ENCODE measurements at regions of chr13 and their contacts with region 1.

Region 1: DNA sequence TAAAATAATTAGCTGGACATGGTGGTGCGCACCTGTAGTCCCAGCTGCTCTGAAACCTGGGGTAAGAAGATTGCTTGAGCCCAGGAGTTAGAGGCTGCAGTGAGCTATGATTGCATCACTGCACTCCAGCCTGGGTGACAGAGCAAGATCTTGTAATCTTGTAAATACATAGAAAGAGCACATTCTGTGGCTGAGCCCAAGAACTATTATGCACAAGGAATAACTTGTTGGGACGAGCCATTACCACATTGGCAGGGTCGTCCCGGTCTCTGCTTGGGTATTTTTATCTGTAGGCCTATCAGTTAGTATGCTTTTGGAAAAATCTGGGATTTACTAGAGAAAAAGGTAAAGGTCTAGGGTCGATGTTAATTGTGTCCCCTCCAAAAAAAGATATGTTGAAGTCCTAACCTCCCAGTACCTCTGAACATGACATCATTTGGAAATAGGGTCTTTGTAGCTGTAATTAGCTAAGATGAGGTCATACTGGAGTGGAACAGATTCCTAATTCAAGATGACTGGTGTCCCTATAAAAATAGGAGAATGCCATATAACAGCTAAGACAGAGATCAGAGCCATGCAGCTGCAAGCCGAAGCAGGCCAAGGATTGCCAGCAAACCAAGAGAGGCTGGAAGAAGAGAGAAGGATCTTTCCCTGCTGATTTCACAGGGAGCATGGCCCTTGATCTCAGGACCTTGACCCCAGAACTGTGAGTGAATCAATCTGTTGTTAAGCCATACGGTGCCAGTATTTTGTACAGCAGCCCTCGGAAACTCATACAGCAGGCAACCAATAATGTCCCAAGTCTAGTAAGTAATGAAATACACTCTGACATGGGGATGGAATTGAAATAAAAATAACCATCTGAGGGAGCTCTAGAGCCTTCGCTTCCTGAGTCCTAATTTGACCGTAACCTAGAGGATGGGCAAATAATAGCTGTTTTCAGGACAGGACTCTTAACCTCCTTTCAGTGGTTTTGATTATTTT is 77.0 kb downstream of the TM9SF2 start:
- DNase-seq: no peak
- H3K4me3 ChIP-seq: no peak overlapping the region
- H3K4me3 Mint-ChIP-seq: no peak overlapping the region
- H3K27ac ChIP-seq: no peak overlapping the region
- H3K27ac Mint-ChIP-seq: peak overlapping the region in 4 of 7 donors; percentile 4 to 65 (median 32)
- H3K4me1 ChIP-seq: no peaks in the 10 kb centered on the region
- H3K4me1 Mint-ChIP-seq: peaks cover 0 to 11% (median 5%) of the 10 kb centered on the region in 4 donors
- H3K27me3 ChIP-seq: no peaks in the 10 kb centered on the region
- H3K27me3 Mint-ChIP-seq: no peaks in the 10 kb centered on the region

Region 2: GRCh38 chr13:99589575-99589974 is 11.3 kb after region 1 on chr13:
- CTCF ChIA-PET with region 1: interaction called, 12 read pairs
- POLR2A ChIA-PET with region 1: no interaction called
- intact Hi-C with region 1: no loop called
- DNase-seq: no peak
- H3K4me3 ChIP-seq: no peak overlapping the region
- H3K4me3 Mint-ChIP-seq: no peak overlapping the region
- H3K27ac ChIP-seq: no peak overlapping the region
- H3K27ac Mint-ChIP-seq: no peak overlapping the region
- H3K4me1 ChIP-seq: no peaks in the 10 kb centered on the region
- H3K4me1 Mint-ChIP-seq: no peaks in the 10 kb centered on the region
- H3K27me3 ChIP-seq: no peaks in the 10 kb centered on the region
- H3K27me3 Mint-ChIP-seq: peaks cover 2% of the 10 kb centered on the region in 2 donors

Region 3: DNA sequence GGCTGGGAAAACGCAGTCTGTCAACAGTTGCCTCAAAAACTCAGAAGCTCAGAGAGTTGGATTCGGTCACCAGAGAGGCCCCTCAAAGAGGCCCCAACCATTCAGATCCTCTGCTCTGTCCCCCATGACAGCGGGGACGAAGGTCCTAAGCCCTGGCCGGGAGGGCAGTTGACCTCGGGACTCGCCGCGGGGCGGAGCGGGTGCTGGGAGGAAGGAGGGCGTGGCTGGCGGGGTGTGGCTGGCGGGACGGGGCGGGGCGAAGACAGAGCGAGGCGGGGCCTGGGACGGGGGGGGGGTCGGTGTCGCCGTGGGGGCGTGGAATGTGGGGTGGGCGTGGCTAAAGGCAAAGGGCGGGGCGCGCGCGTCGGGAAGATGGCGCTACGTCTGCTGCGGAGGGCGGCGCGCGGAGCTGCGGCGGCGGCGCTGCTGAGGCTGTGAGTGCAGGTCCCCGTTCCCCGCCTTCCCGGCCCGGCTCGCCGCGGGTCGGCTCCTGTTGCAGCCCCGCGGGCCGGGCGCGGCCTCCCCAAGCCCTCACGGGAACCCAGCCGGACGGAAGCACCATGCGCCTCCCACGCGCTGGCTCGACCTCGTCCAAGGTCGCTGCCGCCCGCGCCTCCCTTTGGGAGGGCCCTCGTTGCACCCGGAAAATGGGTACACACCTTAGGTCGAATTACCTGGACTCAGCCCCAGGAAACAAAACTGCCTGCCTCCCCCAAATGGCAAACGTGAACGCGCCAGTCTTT is 28.3 kb after region 1 on chr13:
- CTCF ChIA-PET with region 1: interaction called, 18 read pairs
- POLR2A ChIA-PET with region 1: interaction called, 9 read pairs
- intact Hi-C with region 1: no loop called
- DNase-seq: peak; percentile 87 to 90 (median 89)
- H3K4me3 ChIP-seq: peak within 1 kb of the TSS; percentile 53 to 78
- H3K4me3 Mint-ChIP-seq: peak within 1 kb of the TSS; percentile 88 to 97 (median 90)
- H3K27ac ChIP-seq: peak within 1 kb of the TSS; percentile 71
- H3K27ac Mint-ChIP-seq: peak within 1 kb of the TSS; percentile 91 to 96 (median 95)
- H3K4me1 ChIP-seq: peaks cover 35% of the 10 kb centered on the region
- H3K4me1 Mint-ChIP-seq: peaks cover 28 to 59% (median 46%) of the 10 kb centered on the region in 4 donors
- H3K27me3 ChIP-seq: no peaks in the 10 kb centered on the region
- H3K27me3 Mint-ChIP-seq: no peaks in the 10 kb centered on the region

Region 4: DNA sequence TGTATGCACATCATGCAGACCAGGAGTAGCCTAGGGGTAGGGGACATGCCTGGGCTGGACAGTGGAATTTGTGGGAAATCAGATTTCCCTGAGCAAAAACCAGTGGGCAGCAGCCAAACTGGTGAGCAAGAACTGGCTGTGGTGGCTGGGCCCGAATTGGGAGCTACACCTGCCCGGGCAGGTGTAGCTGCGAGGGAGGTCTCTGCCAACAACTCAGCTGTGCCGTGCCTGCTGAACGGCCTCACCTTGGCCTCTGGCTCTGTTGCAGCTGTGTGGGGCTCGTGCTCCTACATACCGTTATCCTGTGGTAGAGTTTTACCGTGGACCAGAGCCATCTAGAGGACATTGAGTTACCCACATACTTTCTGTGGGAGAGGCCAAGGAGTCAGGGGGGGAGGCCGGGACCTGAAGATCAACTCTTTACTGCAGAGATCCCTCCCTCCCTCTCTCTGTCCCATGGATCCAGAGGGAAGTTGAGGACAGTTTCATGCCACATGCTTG is 36.2 kb after region 1 on chr13:
- CTCF ChIA-PET with region 1: interaction called, 30 read pairs
- POLR2A ChIA-PET with region 1: no interaction called
- intact Hi-C with region 1: loop called (anchors 2 kb)
- DNase-seq: peak in 3 of 5 donors; percentile 13 to 23 (median 16)
- H3K4me3 ChIP-seq: no peak overlapping the region
- H3K4me3 Mint-ChIP-seq: no peak overlapping the region
- H3K27ac ChIP-seq: no peak overlapping the region
- H3K27ac Mint-ChIP-seq: no peak overlapping the region
- H3K4me1 ChIP-seq: peaks cover 13% of the 10 kb centered on the region
- H3K4me1 Mint-ChIP-seq: peaks cover 22 to 48% (median 33%) of the 10 kb centered on the region in 4 donors
- H3K27me3 ChIP-seq: no peaks in the 10 kb centered on the region
- H3K27me3 Mint-ChIP-seq: no peaks in the 10 kb centered on the region